ENCODE measurements at regions of chr5 and their contacts with region 1.

Region 1: DNA sequence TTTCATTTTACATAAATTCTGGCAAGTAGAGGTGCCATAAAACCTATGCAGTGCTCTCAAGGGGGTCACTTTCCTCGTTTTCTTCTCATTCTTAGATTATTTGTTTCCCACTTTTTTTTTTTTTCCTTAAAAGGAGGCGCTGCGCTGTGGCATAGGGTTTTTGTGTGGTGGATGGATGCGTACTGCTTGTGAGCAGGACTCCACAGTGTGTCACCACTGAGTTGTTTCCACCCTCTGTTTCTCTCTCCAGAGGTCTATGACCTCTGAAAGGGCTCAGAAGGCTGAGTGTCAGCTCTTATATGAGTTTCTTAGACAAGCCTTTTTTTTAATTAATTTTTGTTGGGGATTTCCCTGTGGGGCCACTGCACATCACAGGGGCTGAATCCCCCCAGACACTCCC is 13.6 kb upstream of the CLTB start:
- DNase-seq: no peak
- ATAC-seq: peak in 1 of 4 experiments; percentile 41
- H3K4me3 ChIP-seq: no peak overlapping the region
- H3K4me3 Mint-ChIP-seq: no peak overlapping the region
- H3K27ac ChIP-seq: no peak overlapping the region
- H3K27ac Mint-ChIP-seq: no peak overlapping the region
- H3K4me1 ChIP-seq: no peaks in the 10 kb centered on the region
- H3K4me1 Mint-ChIP-seq: peaks cover 4 to 5% (median 5%) of the 10 kb centered on the region in 3 donors
- H3K27me3 ChIP-seq: no peaks in the 10 kb centered on the region
- H3K27me3 Mint-ChIP-seq: peaks cover 5% of the 10 kb centered on the region in 2 donors

Region 2: DNA sequence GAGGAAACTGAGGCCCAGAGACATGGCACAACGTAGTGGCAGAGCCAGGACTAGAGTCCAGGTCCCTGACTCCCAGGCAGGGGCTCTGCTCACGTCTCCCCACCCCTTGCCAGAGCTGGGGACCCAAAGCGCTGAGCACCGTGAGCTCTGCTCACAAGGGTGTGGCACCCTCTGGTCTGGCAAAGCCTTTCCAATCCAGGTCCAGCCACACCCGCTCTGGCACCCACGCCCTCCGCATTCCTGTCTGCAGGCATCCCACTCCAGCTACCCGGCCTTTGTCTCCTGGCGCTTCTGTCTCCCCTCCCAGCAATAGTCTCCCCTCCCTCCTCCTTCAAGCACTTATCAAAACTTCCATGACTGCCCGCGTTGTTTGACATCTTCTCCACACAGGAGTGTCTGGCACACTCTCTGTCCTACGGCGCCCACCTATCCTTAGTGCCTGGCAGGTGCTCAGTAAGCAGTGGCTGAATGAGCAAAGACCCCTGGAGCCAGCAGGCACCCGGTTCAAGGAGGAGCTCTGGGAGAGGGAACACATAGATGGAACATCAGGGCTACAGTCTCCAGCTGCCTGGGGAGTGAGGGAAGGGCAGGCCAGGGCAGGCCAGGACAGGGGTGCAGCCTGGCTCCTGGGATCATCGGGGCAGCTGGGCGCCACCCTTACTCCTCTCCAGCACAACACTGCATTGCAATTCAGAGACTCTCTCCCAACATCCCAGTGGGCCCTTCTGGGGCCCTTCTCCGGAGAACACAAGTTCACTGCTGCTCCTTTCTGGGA is 29.4 kb before region 1 on chr5:
- CTCF ChIA-PET with region 1: no interaction called
- POLR2A ChIA-PET with region 1: interaction called in 1 of 2 experiments, 11 read pairs
- DNase-seq: no peak
- ATAC-seq: no peak
- H3K4me3 ChIP-seq: no peak overlapping the region
- H3K4me3 Mint-ChIP-seq: no peak overlapping the region
- H3K27ac ChIP-seq: no peak overlapping the region
- H3K27ac Mint-ChIP-seq: no peak overlapping the region
- H3K4me1 ChIP-seq: no peaks in the 10 kb centered on the region
- H3K4me1 Mint-ChIP-seq: peaks cover 0 to 6% (median 0%) of the 10 kb centered on the region in 3 donors
- H3K27me3 ChIP-seq: no peaks in the 10 kb centered on the region
- H3K27me3 Mint-ChIP-seq: no peaks in the 10 kb centered on the region

Region 3: GRCh38 chr5:176474510-176474909 is 44.5 kb after region 1 on chr5:
- CTCF ChIA-PET with region 1: no interaction called
- POLR2A ChIA-PET with region 1: interaction called in 1 of 2 experiments, 18 read pairs
- DNase-seq: no peak
- ATAC-seq: no peak
- H3K4me3 ChIP-seq: no peak overlapping the region
- H3K4me3 Mint-ChIP-seq: no peak overlapping the region
- H3K27ac ChIP-seq: no peak overlapping the region
- H3K27ac Mint-ChIP-seq: no peak overlapping the region
- H3K4me1 ChIP-seq: no peaks in the 10 kb centered on the region
- H3K4me1 Mint-ChIP-seq: peaks cover 28 to 45% (median 37%) of the 10 kb centered on the region in 3 donors
- H3K27me3 ChIP-seq: no peaks in the 10 kb centered on the region
- H3K27me3 Mint-ChIP-seq: no peaks in the 10 kb centered on the region